Activated T-helper 2 cell treated with anti-CD3 and anti-CD28 coated beads, Interferon-gamma antibody, Interleukin-2, Interleukin-4, amounts not matched to agents 10 μg/mL and 5 μg/mL and 100 μg/mL, durations not matched to agents 14 hours and 24 hours and 36 hours (primary cell): ENCODE measurements at regions of chr2 and their contacts with region 1.

Region 1: DNA sequence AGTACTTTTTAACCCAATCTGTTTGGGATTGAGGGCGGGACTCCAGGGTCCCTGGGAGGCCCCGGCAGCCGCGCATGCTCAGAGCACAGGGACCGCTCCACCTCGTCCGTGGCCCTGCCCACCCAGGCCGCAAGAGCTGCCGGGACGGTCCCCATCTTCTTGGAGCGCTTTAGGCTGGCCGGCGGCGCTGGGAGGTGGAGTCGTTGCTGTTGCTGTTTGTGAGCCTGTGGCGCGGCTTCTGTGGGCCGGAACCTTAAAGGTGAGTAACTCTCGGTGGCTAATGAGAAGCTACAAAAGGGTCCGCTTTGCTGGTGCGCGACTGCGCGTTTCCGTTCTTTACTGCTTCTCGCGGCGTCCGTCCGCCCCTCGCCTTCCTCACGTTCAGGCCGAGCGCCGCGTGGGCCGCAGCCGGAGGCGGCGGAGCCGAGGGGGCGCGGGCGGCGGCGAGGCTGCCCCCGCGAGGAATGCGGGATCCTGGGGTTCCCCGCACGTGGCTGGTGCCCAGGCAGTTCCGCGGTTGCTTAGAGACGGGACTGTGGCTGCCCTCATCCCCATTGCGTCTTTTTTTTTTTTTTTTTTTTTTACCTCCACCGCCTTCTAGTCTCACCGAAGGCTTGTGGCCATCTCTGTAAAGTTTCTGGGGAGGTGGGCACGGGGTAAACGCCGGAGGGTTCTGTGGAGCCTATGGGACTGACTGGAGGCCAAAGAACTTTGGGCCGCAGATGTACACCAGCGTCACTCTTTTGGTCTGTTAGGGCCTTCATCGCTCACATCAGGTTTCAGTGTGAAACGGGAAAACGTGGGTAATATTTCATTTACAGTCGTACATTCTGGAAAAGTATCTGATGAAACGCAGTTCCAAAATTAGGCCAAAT is at the start of gene SSB:
- DNase-seq: peak; percentile 88
- H3K4me3 Mint-ChIP-seq: peak within 1 kb of the TSS; percentile 86
- H3K27ac Mint-ChIP-seq: peak within 1 kb of the TSS; percentile 85
- H3K4me1 Mint-ChIP-seq: peaks cover 12% of the 10 kb centered on the region
- H3K27me3 Mint-ChIP-seq: peaks cover 3% of the 10 kb centered on the region
- total RNA-seq, gene SSB: 99.7 and 111 TPM in 2 replicates

Region 2: GRCh38 chr2:169363560-169364150 is 435.3 kb before region 1 on chr2:
- intact Hi-C with region 1: loop called (anchors 10 kb)
- DNase-seq: peak; percentile 43
- H3K4me3 Mint-ChIP-seq: peak overlapping the region; percentile 90
- H3K27ac Mint-ChIP-seq: peak overlapping the region; percentile 71
- H3K4me1 Mint-ChIP-seq: peaks cover 36% of the 10 kb centered on the region
- H3K27me3 Mint-ChIP-seq: peaks cover 49% of the 10 kb centered on the region

Region 3: GRCh38 chr2:169573160-169573973 is 225.6 kb before region 1 on chr2 and contains the start of gene FASTKD1:
- intact Hi-C with region 1: loop called (anchors 1 kb)
- DNase-seq: peak; percentile 81
- H3K4me3 Mint-ChIP-seq: peak within 1 kb of the TSS; percentile 97
- H3K27ac Mint-ChIP-seq: peak within 1 kb of the TSS; percentile 91
- H3K4me1 Mint-ChIP-seq: peaks cover 18% of the 10 kb centered on the region
- H3K27me3 Mint-ChIP-seq: no peaks in the 10 kb centered on the region
- total RNA-seq, gene FASTKD1: 61.5 and 61.9 TPM in 2 replicates

Region 4: DNA sequence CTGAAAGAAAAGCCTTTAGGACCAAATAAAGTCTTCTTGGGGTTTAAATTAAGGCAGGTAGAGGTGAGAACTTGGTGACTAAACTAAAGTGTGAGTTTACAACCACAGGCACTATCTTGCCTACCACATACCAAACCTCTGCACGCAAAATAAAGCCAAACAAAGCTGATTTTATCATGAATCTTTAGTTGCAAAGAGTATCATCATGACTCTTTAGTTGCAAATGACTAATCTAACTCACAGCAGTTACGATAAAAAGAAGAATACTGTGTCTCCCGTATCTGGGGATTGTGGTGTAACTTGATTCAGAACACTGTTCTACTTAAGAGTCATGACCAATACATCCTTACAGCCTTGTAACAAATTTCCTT is 115.9 kb before region 1 on chr2:
- intact Hi-C with region 1: loop called (anchors 2 kb)
- DNase-seq: no peak
- H3K4me3 Mint-ChIP-seq: no peak overlapping the region
- H3K27ac Mint-ChIP-seq: peak overlapping the region; percentile 35
- H3K4me1 Mint-ChIP-seq: peaks cover 22% of the 10 kb centered on the region
- H3K27me3 Mint-ChIP-seq: peaks cover 4% of the 10 kb centered on the region

Region 5: DNA sequence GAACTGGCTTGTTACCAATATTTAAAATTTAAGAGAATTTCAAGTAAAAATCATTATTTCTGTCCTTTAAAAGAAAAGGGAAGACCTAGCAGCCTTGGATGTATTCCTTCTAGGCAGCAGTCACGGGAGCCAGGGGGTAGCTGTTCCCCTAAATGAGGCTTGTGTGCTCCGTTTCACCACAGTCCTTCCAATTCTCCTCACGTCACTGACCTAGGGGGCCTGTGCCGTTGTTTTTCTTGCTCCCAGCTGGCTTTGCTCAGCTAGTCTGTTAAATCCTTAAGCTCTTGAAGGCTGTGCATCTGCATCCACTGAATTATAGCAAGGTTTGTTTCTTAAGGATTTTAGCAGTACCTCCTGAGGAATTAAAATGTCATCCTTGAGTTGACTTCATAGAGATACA is 55.4 kb before region 1 on chr2:
- intact Hi-C with region 1: no loop called
- DNase-seq: no peak
- H3K4me3 Mint-ChIP-seq: no peak overlapping the region
- H3K27ac Mint-ChIP-seq: no peak overlapping the region
- H3K4me1 Mint-ChIP-seq: no peaks in the 10 kb centered on the region
- H3K27me3 Mint-ChIP-seq: peaks cover 3% of the 10 kb centered on the region